Caco-2 (cell line): ENCODE measurements at regions of chr19 and their contacts with region 1.

Region 1: DNA sequence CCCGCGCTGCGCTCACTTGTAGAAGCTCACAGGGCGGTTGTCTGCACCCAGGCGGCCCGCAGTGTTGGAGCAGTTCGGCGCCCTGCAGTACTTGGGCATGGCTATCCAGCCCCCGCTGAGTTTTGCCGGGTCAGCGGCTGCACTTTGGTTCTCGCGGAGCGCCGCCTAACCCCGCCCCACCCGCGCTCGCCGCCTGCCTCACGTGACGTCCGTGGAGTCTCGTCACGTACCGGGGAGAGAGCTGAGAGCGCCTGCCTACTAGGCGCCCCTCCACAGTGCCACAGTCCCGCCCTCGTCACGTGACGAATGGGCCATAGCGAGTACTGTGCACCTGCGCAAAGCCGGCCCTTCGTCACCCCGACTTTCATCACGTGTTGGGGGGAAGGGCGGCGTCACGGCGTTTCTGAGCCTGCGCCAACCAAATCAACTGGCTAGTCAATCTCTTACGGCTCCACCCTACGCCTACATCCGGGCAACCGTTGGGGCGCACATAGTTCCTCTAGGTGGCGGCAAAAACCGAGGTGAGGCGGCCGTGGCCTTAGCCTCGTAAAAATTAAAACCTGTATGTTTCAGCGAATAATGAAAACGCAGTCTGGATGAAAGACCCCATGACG is at the start of gene THAP8:
- DNase-seq: peak; percentile 99 to 100
- H3K4me3 ChIP-seq: peak within 1 kb of the TSS; percentile 61
- H3K4me3 Mint-ChIP-seq: peak within 1 kb of the TSS; percentile 88
- H3K27ac Mint-ChIP-seq: peak within 1 kb of the TSS; percentile 82
- H3K4me1 ChIP-seq: peaks cover 22% of the 10 kb centered on the region; the same call in 1 of the 2 replicates
- H3K4me1 Mint-ChIP-seq: peaks cover 25% of the 10 kb centered on the region
- H3K27me3 ChIP-seq: no peaks in the 10 kb centered on the region
- H3K27me3 Mint-ChIP-seq: no peaks in the 10 kb centered on the region
- CTCF ChIP-seq: peak in 1 of 2 experiments; percentile 43
- total RNA-seq, gene THAP8: 7.6 and 8.8 TPM in 2 replicates

Region 2: DNA sequence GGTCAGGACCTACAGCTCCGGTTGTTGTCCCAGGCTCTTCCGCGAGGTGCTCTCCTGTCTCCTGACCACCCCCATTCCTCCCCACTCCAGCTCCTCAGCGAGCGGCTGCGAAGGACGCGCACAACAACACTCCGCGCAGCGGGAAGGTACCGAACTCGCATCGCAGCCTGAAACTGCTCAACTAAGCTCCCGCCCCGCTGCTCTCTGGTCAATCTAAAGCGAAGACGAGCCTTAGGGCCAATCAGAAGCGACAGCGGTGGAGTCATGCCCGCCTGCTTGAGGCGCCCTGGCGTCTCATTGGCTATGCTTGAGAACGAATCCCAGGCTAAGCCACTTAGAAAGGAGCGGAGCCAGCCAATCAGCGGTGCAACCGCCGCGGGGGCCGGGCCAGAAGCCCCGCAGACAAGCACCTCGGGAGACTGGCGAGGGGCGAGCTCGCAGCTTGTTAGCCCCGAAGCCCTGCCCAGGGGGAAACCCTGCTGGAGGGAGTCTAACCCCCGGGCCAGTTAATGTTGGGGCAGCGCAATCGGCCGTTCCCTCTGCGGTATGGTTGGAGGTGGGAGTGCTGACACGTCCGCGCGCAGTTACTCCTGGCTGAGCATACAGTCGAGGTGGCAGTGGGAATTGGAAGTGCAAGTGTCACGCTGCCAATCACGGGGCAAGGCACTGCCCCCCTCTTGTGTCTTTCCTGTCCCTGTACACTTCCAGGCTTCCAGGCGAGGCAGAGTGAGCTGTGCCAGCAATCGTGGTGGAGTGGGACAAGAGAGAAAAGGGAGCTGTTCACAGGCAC is 351.8 kb before region 1 on chr19:
- CTCF ChIA-PET with region 1: no interaction called
- POLR2A ChIA-PET with region 1: no interaction called
- intact Hi-C with region 1: loop called (anchors 5 kb)
- DNase-seq: peak; percentile 95 to 98
- H3K4me3 ChIP-seq: peak overlapping the region; percentile 71
- H3K4me3 Mint-ChIP-seq: peak overlapping the region; percentile 82
- H3K27ac Mint-ChIP-seq: peak overlapping the region; percentile 64
- H3K4me1 ChIP-seq: no peaks in the 10 kb centered on the region
- H3K4me1 Mint-ChIP-seq: peaks cover 6% of the 10 kb centered on the region
- H3K27me3 ChIP-seq: no peaks in the 10 kb centered on the region
- H3K27me3 Mint-ChIP-seq: peaks cover 3% of the 10 kb centered on the region
- CTCF ChIP-seq: no peak

Region 3: DNA sequence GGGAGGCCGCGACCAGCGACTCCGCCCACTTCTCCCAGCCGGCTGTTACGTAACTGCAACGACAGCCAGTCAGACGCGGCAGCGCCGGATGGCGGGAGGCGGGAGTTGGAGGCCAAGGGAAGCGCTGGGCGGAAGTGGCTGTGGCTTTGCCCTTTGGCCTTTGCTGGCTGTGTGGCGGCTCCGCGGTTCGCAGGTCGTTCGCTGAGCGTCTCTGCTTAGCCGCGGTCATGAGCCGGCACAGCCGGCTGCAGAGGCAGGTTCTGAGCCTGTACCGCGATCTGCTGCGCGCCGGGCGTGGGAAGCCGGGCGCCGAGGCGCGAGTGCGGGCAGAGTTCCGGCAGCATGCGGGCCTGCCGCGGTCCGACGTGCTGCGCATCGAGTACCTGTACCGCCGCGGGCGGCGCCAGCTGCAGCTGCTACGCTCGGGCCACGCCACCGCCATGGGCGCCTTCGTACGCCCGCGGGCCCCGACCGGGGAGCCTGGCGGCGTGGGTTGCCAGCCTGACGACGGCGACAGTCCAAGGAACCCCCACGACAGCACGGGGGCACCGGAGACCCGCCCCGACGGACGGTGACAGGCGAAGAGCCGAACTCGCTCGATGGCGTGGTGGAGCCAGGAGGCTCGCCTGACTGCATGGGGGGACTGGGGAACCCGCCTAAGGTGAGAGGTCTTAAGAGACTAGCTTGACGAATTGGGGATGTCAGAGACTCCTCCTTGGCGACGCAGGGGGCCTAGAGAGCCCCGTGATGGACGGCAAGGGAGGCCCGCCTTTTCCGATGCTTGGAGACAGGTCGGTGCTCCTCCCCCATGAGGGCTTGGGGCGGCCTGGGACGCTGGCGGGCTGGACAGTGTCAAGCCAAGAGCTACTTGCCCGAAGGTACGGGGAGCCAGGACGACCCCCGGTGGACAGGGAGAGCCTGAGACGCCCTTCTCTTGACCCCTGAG is 58.9 kb before region 1 on chr19 and contains the start of gene SDHAF1:
- CTCF ChIA-PET with region 1: interaction called, 3 read pairs
- POLR2A ChIA-PET with region 1: no interaction called
- intact Hi-C with region 1: loop called (anchors 1 kb)
- DNase-seq: peak; percentile 97
- H3K4me3 ChIP-seq: peak within 1 kb of the TSS; percentile 98
- H3K4me3 Mint-ChIP-seq: peak within 1 kb of the TSS; percentile 95
- H3K27ac Mint-ChIP-seq: peak within 1 kb of the TSS; percentile 93
- H3K4me1 ChIP-seq: no peaks in the 10 kb centered on the region
- H3K4me1 Mint-ChIP-seq: peaks cover 11% of the 10 kb centered on the region
- H3K27me3 ChIP-seq: no peaks in the 10 kb centered on the region
- H3K27me3 Mint-ChIP-seq: no peaks in the 10 kb centered on the region
- CTCF ChIP-seq: no peak
- total RNA-seq, gene SDHAF1: 26.2 and 28.1 TPM in 2 replicates

Region 4: GRCh38 chr19:36014029-36014924 is 39.9 kb before region 1 on chr19 and contains the start of gene ALKBH6:
- CTCF ChIA-PET with region 1: interaction called, 6 read pairs
- POLR2A ChIA-PET with region 1: interaction called, 14 read pairs
- intact Hi-C with region 1: loop called (anchors 1 kb)
- DNase-seq: peak; percentile 99
- H3K4me3 ChIP-seq: peak within 1 kb of the TSS; percentile 72
- H3K4me3 Mint-ChIP-seq: peak within 1 kb of the TSS; percentile 98
- H3K27ac Mint-ChIP-seq: peak within 1 kb of the TSS; percentile 92
- H3K4me1 ChIP-seq: peaks cover 12% of the 10 kb centered on the region
- H3K4me1 Mint-ChIP-seq: peaks cover 34% of the 10 kb centered on the region
- H3K27me3 ChIP-seq: no peaks in the 10 kb centered on the region
- H3K27me3 Mint-ChIP-seq: no peaks in the 10 kb centered on the region
- CTCF ChIP-seq: no peak
- total RNA-seq, gene ALKBH6: 29.4 and 30.8 TPM in 2 replicates

Region 5: GRCh38 chr19:36114763-36115452 is 60.7 kb after region 1 on chr19 and contains the start of gene POLR2I:
- CTCF ChIA-PET with region 1: interaction called, 3 read pairs
- POLR2A ChIA-PET with region 1: interaction called, 13 read pairs
- intact Hi-C with region 1: loop called (anchors 1 kb)
- DNase-seq: peak; percentile 100
- H3K4me3 ChIP-seq: peak within 1 kb of the TSS; percentile 92
- H3K4me3 Mint-ChIP-seq: peak within 1 kb of the TSS; percentile 92
- H3K27ac Mint-ChIP-seq: peak within 1 kb of the TSS; percentile 96
- H3K4me1 ChIP-seq: peaks cover 9% of the 10 kb centered on the region; the same call in 1 of the 2 replicates
- H3K4me1 Mint-ChIP-seq: peaks cover 32% of the 10 kb centered on the region
- H3K27me3 ChIP-seq: no peaks in the 10 kb centered on the region
- H3K27me3 Mint-ChIP-seq: no peaks in the 10 kb centered on the region
- CTCF ChIP-seq: no peak
- total RNA-seq, gene POLR2I: 121 and 129 TPM in 2 replicates